ENCODE measurements at regions of chr17 and their contacts with region 1.

Region 1: GRCh38 chr17:73166731-73167581 is 2.1 kb downstream of the SSTR2 start:
- DNase-seq: peak; percentile 30
- CTCF ChIP-seq: no peak

Region 2: DNA sequence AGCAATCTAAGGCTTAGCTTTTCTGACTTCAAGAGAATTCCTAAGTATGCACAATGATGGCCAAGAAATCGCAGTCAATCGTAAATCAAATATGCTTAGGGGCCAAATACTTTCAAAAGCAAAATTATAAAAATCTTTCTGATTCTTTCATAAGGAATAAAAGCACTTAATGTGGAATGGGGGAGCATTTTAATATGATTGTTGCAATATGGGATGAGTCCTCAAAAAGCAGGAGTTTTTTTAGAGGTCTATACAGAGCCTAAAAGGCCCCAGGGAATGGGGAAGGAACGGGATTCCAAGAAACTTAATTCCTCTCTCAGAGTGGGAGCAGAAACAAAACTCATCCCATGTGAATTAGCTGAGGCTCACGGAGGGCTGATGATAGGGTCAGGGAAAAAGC is 59.8 kb before region 1 on chr17:
- CTCF ChIA-PET with region 1: no interaction called
- POLR2A ChIA-PET with region 1: no interaction called
- DNase-seq: no peak
- CTCF ChIP-seq: no peak

Region 3: GRCh38 chr17:73133911-73134649 is 32.9 kb before region 1 on chr17:
- CTCF ChIA-PET with region 1: no interaction called
- POLR2A ChIA-PET with region 1: interaction called, 10 read pairs
- DNase-seq: no peak
- CTCF ChIP-seq: no peak

Measured in GM10248 (cell line).